Heart left ventricle (tissue), 16 donors: ENCODE measurements at regions of chr13 and their contacts with region 1.

Region 1: DNA sequence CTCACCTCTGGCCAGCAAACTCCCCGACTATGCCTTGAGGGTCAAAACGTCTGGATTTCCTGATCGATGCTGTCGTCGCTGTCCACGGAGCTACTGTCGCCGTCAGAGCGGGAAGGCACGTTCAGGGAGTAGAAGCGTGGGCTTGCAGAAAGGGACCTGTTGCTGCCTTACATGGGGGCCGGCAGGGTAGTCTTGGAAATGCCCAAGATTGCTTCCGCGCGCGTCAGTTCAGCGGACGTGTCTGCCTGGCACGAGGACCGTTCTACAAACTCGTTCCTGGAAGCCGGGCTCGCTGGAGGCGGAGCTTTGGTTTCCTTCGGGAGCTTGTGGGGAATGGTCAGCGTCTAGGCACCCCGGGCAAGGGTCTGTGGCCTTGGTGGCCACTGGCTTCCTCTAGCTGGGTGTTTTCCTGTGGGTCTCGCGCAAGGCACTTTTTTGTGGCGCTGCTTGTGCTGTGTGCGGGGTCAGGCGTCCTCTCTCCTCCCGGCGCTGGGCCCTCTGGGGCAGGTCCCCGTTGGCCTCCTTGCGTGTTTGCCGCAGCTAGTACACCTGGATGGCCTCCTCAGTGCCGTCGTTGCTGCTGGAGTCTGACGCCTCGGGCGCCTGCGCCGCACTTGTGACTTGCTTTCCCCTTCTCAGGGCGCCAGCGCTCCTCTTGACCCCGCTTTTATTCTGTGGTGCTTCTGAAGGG is 15.4 kb downstream of the RB1 start:
- DNase-seq: peak in 3 of 5 donors; percentile 27 to 58 (median 27)
- ATAC-seq: no peak
- H3K4me3 ChIP-seq: peak overlapping the region in 8 of 12 donors; percentile 15 to 51 (median 35)
- H3K27ac ChIP-seq: peak overlapping the region in 2 of 12 donors; percentile 36 to 58
- H3K4me1 ChIP-seq: peaks cover 0 to 21% (median 10%) of the 10 kb centered on the region in 12 donors
- H3K27me3 ChIP-seq: no peaks in the 10 kb centered on the region
- CTCF ChIP-seq: no peak
- POLR2A ChIP-seq: no peak

Region 2: DNA sequence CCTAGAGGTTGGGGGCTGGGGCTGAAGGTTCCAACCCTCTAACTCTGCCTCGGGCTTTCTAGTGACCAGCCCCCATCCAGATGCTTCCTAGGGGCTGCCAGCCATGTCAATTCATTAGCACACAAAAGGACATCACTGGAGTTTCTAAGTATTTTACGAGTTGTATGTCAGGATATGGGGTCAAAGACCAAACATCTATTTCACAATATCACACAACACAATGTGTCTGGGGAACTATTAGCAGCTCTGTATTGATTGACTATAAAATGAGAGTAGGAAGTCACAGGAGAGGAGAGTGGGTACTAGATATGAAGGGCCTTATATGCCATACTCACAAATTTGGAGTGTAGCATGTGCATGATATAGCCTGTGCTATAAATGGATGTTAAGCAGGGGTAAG is 51.8 kb after region 1 on chr13:
- intact Hi-C with region 1: no loop called
- DNase-seq: no peak
- ATAC-seq: no peak
- H3K4me3 ChIP-seq: no peak overlapping the region
- H3K27ac ChIP-seq: no peak overlapping the region
- H3K4me1 ChIP-seq: no peaks in the 10 kb centered on the region
- H3K27me3 ChIP-seq: no peaks in the 10 kb centered on the region
- CTCF ChIP-seq: no peak
- POLR2A ChIP-seq: no peak

Region 3: DNA sequence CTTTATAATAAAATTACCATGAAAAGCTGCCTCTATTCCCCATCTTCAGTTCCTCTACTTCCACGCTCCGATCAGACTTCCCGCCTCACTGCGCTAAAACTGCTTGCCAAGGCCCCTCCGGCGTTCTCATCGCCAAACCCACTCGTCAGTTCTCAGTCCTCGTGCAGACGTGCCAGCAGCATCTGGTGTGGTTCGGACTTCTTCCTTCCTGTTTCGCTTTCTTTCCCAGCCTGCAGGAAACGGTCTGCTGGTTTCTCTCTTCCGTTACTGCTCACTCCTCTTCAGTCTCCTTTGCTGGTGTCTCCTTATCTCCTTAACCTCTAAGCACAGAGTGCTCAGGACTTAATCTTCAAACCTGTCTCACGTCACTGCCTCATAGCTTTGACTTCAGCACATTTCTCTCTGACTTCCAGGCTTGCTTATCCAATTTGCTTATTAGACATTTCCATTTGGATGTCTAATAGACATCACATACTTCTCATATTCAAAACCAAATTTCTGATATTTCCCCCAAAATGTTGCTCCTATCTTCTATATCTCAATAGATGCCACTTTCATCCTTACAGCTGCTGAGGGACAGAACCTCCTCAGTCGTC is 173.6 kb after region 1 on chr13:
- intact Hi-C with region 1: no loop called
- DNase-seq: peak; percentile 86 to 90 (median 88)
- ATAC-seq: peak; percentile 89 to 95 (median 92)
- H3K4me3 ChIP-seq: peak overlapping the region in 10 of 12 donors; percentile 21 to 55 (median 43)
- H3K27ac ChIP-seq: peak overlapping the region; percentile 55 to 93 (median 76)
- H3K4me1 ChIP-seq: peaks cover 0 to 80% (median 24%) of the 10 kb centered on the region in 12 donors
- H3K27me3 ChIP-seq: no peaks in the 10 kb centered on the region
- CTCF ChIP-seq: no peak
- POLR2A ChIP-seq: no peak

Region 4: GRCh38 chr13:48769107-48769704 is 450.2 kb after region 1 on chr13:
- intact Hi-C with region 1: loop called in 2 of 10 experiments (anchors 10 kb)
- DNase-seq: peak in 4 of 5 donors; percentile 71 to 86 (median 81)
- ATAC-seq: peak; percentile 57 to 96 (median 92)
- H3K4me3 ChIP-seq: no peak overlapping the region
- H3K27ac ChIP-seq: peak overlapping the region in 4 of 12 donors; percentile 27 to 44 (median 31)
- H3K4me1 ChIP-seq: peaks cover 0 to 14% (median 0%) of the 10 kb centered on the region in 12 donors
- H3K27me3 ChIP-seq: no peaks in the 10 kb centered on the region
- CTCF ChIP-seq: peak; percentile 94 to 100 (median 99)
- POLR2A ChIP-seq: no peak